ENCODE measurements at regions of chr2 and their contacts with region 1.

Region 1: GRCh38 chr2:158745044-158745865 is 49.9 kb upstream of the DAPL1 start:
- DNase-seq: no peak
- ATAC-seq: no peak

Region 2: DNA sequence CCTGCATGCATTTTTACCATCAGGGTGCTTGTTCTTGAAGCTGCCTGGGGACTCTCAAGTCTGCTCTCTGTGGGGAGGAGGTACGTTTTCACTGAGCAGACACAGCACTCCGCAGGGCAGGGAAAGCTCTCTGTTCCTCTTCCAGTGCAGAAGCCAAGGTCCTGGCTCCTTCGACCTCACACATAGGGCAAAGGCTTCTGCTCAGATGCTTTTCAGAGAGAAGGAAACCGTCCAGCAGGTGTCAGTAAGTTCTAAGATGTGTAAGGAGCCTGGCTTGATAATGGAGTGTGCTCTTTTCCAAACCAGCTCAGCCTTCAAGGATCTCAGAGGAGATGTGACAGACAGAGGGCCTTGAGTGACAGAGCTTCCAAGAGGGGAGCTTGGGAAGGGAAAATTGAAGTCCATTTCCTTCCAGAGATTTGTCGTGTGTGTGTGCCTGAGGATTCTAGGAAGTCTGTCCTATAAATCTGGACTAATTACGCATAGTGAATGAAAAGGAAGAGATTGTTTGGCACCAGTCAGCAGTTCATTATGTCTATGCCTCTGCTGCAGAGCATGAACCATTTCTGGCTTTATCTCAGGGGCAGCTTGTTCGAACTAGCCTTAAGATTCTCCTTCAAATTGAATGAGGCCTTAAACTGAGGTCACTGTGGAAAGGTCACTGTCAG is 710.9 kb before region 1 on chr2:
- intact Hi-C with region 1: loop called (anchors 5 kb)
- DNase-seq: no peak
- ATAC-seq: peak; percentile 59

Region 3: GRCh38 chr2:158600155-158600802 is 145.0 kb before region 1 on chr2:
- intact Hi-C with region 1: loop called (anchors 10 kb)
- DNase-seq: no peak
- ATAC-seq: peak; percentile 70

Region 4: GRCh38 chr2:158676696-158677095 is 68.6 kb before region 1 on chr2:
- intact Hi-C with region 1: loop called (anchors 5 kb)
- DNase-seq: no peak
- ATAC-seq: peak; percentile 77

Region 5: DNA sequence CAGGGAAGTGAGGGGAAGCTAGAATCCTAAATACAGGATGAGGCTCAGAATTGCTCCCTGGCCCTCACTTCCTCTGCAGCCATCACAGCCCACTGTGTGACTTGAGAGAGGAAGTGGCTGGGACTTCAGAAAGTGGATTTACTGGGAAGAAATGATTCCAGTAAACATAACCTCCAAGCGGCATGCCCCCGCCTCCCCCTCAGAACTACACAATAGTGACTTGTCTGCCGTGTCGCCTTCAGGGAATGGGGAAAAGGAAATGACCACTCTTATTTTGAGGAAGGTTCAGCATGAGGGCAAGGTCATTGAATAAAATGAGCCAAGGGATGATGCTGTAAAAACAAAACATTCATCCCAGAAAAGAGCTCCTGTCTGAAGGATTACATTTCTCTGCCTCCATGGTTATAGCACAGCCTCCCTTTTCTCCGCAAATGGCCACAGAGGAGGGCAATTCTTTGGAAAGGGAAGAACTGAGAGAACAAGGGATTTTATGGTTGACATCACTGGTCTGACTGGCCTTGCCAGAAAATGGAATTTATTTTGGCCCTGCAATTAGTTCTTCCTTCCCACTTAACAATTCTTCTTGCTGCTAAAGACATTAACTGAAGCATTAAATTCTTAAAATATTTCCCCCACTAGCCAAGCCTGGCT is 29.0 kb before region 1 on chr2:
- intact Hi-C with region 1: loop called (anchors 1 kb)
- DNase-seq: no peak
- ATAC-seq: peak; percentile 53

Region 6: DNA sequence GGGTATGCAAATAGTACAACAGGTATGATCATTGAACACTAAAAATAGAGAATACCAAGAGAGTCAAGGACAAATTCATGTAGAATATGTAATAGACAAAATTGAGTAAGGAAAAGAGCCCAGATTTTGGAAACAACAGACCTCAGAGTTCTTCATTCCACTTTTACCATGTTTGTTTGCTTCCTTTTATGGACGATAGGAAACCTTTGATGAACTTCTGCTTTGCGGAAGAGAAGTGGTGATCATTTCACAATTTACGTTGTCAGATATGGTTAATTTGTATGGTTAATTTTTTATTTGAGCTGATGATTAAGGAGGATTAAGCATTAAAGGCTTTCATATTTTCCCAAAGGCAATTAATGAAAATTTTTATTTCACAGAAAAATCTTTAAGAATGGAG is 983.4 kb after region 1 on chr2:
- intact Hi-C with region 1: no loop called
- DNase-seq: no peak
- ATAC-seq: no peak